ENCODE measurements at regions of chr3 and their contacts with region 1.

Region 1: GRCh38 chr3:50272911-50273693 is 4.2 kb downstream of the SEMA3B start:
- DNase-seq: no peak
- H3K4me3 ChIP-seq: peak overlapping the region; percentile 39 to 57 (median 42)
- H3K27ac ChIP-seq: peak overlapping the region in 3 of 4 donors; percentile 19 to 56 (median 32)
- H3K4me1 ChIP-seq: peaks cover 35 to 72% (median 57%) of the 10 kb centered on the region in 4 donors
- H3K27me3 ChIP-seq: peaks cover 0 to 40% (median 5%) of the 10 kb centered on the region in 4 donors
- CTCF ChIP-seq: peak; percentile 97 to 99 (median 98)
- EP300 ChIP-seq: no peak
- POLR2A ChIP-seq: no peak

Region 2: DNA sequence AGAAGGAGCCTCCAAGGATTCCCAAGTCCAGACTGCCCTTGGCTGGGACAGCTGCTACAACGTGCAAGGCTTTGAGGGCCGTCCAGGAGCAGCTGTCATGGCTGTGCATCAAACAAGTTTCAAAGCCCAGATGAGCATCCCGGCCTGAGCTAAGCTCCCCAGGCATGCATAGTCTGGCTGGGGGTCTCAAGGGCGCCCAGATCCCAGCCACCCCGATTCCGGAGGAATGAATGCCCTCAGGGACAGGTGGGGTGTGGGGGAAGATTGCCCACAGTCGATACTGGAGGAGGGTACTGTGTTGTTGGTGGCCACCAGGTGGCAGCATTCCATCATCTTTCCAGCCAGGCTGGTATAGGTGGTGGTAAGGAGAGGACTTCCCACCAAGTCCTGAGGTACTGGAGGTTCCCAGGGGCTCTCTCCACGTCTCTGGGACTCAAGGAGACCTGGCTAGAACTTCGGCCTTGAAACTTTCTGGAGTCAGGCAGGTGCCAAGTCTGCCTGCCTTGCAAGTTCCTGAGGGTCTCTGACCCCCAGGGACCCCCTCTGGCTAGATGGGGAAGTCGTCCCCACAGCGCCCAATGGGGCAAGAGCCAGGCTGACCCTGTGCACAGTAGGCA is 151.6 kb before region 1 on chr3:
- intact Hi-C with region 1: loop called (anchors 5 kb)
- DNase-seq: no peak
- H3K4me3 ChIP-seq: no peak overlapping the region
- H3K27ac ChIP-seq: no peak overlapping the region
- H3K4me1 ChIP-seq: peaks cover 27 to 40% (median 39%) of the 10 kb centered on the region in 4 donors
- H3K27me3 ChIP-seq: peaks cover 0 to 8% (median 0%) of the 10 kb centered on the region in 4 donors
- CTCF ChIP-seq: peak; percentile 84 to 85 (median 85)
- EP300 ChIP-seq: no peak
- POLR2A ChIP-seq: no peak

Region 3: DNA sequence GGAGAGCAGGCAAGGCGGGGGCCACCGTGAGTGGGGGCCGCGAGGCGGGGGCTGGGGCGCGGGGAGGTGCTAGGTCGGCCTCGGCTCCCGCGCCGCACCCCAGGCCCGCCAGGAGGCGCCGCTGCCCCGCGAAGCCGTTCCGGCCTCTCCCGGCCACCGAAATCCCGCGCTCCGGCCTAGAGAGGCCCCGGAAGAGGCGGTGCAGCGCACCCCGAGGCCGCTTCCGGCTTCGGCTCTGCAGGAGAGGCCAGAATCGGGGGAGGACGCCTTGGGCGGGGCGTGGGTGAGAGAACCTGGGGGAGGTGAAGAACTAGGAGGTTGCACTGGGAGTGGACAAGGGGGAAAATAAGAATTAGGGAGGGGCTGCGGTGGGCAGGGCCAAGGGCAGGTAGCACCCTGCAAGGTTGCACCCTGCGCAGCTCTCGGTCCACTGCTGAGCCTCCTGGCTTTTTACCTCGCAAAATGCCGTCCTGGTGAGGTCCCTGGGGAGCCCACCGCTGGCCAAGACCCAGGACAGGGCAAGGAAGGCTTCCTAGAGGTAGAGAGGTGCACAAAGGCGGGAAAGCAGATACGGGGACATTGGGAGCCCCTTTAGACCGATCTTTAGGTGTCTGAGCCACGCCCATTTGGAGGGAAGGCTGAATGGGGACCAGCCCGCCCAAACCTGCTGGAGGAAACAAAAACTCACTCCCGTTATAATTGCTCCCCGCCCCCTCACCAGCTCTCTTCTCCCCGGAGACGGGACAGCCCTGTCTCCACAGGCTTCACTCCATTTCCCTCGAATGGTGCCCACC is 45.5 kb before region 1 on chr3:
- intact Hi-C with region 1: loop called (anchors 2 kb)
- DNase-seq: peak; percentile 95
- H3K4me3 ChIP-seq: peak overlapping the region; percentile 55 to 75 (median 65)
- H3K27ac ChIP-seq: peak overlapping the region; percentile 57 to 73 (median 62)
- H3K4me1 ChIP-seq: peaks cover 17 to 28% (median 27%) of the 10 kb centered on the region in 4 donors
- H3K27me3 ChIP-seq: peaks cover 0 to 7% (median 0%) of the 10 kb centered on the region in 4 donors
- CTCF ChIP-seq: peak; percentile 96 to 97 (median 97)
- EP300 ChIP-seq: no peak
- POLR2A ChIP-seq: no peak

Region 4: GRCh38 chr3:50259432-50260026 is 13.6 kb before region 1 on chr3:
- intact Hi-C with region 1: loop called (anchors 2 kb)
- DNase-seq: no peak
- H3K4me3 ChIP-seq: peak overlapping the region; percentile 59 to 69 (median 64)
- H3K27ac ChIP-seq: peak overlapping the region; percentile 93 to 100 (median 96)
- H3K4me1 ChIP-seq: peaks cover 64 to 93% (median 88%) of the 10 kb centered on the region in 4 donors
- H3K27me3 ChIP-seq: no peaks in the 10 kb centered on the region
- CTCF ChIP-seq: no peak
- EP300 ChIP-seq: no peak
- POLR2A ChIP-seq: no peak

Region 5: DNA sequence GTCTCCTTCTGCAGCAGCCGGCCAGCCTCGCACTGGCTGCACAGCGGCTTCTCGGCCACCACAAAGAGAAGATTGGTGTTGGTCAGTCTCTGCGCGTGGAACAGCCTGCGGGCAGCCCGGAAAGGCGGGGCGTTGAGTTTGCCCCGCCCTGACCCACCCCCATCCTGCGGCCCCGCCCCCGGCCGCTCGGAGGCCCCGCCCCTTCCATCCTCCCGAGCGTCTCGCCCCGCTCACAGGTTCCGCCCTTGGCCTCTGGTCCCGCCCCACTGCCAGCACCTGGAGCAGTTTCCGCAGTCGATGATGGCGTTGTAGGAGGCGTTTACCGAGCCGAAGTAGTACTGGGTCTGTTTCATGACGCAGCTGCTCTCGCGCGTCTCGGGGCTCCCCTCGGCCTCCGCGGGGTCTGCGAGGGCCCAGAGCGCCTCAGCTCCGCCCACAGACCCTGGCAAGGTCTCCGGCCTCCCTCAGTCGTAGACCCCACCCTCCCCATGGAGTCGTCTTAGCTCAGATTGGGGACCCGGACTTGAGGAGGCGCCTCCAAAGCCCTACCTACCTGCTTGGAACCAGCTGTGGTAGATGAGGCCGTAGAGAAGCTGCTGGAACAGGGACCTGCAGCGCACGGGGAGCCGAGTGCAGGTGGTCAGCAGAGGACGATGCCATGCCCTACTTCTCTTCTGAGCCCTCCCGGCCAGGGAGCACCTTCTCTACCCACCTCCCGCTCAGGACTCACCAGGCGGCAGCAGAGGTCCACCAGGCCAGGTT is 92.2 kb after region 1 on chr3:
- intact Hi-C with region 1: no loop called
- DNase-seq: peak; percentile 94
- H3K4me3 ChIP-seq: peak overlapping the region; percentile 58 to 84 (median 64)
- H3K27ac ChIP-seq: peak overlapping the region; percentile 56 to 79 (median 72)
- H3K4me1 ChIP-seq: peaks cover 14 to 23% (median 21%) of the 10 kb centered on the region in 4 donors
- H3K27me3 ChIP-seq: no peaks in the 10 kb centered on the region
- CTCF ChIP-seq: no peak
- EP300 ChIP-seq: no peak
- POLR2A ChIP-seq: no peak